Activated CD4-positive, alpha-beta T cell treated with anti-CD3 and anti-CD28 coated beads for 36 hours (primary cell): ENCODE measurements at regions of chr10 and their contacts with region 1.

Region 1: DNA sequence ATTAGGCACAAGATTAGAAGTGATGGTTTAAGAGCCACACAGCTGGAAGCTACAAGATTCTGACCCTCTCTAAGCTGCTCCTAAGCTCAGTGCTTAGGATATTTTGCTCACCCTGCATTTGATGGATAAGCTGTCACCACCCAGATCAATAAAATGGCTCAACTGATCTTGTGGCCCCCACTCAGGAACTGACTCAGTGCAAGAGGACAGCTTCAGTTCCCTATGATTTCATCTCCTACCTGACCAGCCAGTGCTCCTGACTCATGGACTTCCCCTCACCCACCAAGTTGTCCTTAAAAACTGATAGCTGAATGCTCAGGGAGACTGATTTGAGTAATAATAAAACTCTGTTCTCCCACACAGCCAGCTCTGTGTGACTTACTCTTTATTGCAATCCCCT is 833.8 kb downstream of the GRID1 start:
- DNase-seq: no peak
- ATAC-seq: no peak
- H3K4me3 Mint-ChIP-seq: no peak overlapping the region
- H3K27ac Mint-ChIP-seq: no peak overlapping the region
- H3K4me1 Mint-ChIP-seq: no peaks in the 10 kb centered on the region
- H3K27me3 Mint-ChIP-seq: peaks cover 5% of the 10 kb centered on the region

Region 2: GRCh38 chr10:83934641-83935338 is 1598.0 kb before region 1 on chr10:
- CTCF ChIA-PET with region 1: no interaction called
- POLR2A ChIA-PET with region 1: no interaction called
- intact Hi-C with region 1: loop called in 1 of 2 experiments (anchors 5 kb)
- DNase-seq: no peak
- ATAC-seq: no peak
- H3K4me3 Mint-ChIP-seq: no peak overlapping the region
- H3K27ac Mint-ChIP-seq: no peak overlapping the region
- H3K4me1 Mint-ChIP-seq: no peaks in the 10 kb centered on the region
- H3K27me3 Mint-ChIP-seq: peaks cover 3% of the 10 kb centered on the region